ENCODE measurements at regions of chr10 and their contacts with region 1.

Region 1: DNA sequence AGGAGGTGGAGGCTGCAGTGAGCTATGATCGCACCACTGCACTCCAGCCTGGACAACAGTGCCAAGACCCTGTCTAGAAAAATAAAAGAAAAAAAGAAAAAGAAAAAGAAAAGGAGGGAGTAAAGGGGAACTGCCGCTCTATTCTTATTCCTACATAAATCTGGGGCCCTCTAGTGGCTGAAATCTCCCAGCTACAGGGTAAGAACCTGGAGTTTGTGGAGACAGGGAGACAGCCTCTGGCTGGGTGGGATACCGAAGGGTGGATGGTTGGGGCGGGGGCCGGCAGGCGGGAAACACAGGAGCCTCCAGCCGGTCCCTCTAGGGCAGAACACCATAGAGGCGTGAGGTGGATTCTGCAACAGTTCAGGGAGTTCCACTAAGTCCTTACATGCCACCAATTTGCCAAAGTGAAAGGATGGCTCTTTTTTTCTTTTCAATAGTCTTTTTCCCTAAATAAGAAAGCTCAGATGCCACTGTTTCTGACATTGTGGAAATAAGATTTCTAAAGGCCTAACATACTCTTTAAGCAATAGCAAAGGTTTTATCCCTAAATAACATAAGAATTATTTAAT is 117.3 kb downstream of the SVIL start:
- DNase-seq: no peak
- ATAC-seq: peak in 3 of 4 donors; percentile 3 to 39 (median 31)
- H3K4me3 ChIP-seq: no peak overlapping the region
- H3K27ac ChIP-seq: peak overlapping the region; percentile 2 to 90 (median 82)
- H3K4me1 ChIP-seq: peaks cover 0 to 38% (median 13%) of the 10 kb centered on the region in 12 donors
- H3K27me3 ChIP-seq: no peaks in the 10 kb centered on the region
- CTCF ChIP-seq: peak; percentile 21 to 60 (median 43)
- POLR2A ChIP-seq: no peak

Region 2: GRCh38 chr10:29430101-29430500 is 87.3 kb before region 1 on chr10:
- intact Hi-C with region 1: no loop called
- DNase-seq: no peak
- ATAC-seq: no peak
- H3K4me3 ChIP-seq: no peak overlapping the region
- H3K27ac ChIP-seq: no peak overlapping the region
- H3K4me1 ChIP-seq: peaks cover 0 to 30% (median 5%) of the 10 kb centered on the region in 12 donors
- H3K27me3 ChIP-seq: no peaks in the 10 kb centered on the region
- CTCF ChIP-seq: no peak
- POLR2A ChIP-seq: no peak

Region 3: DNA sequence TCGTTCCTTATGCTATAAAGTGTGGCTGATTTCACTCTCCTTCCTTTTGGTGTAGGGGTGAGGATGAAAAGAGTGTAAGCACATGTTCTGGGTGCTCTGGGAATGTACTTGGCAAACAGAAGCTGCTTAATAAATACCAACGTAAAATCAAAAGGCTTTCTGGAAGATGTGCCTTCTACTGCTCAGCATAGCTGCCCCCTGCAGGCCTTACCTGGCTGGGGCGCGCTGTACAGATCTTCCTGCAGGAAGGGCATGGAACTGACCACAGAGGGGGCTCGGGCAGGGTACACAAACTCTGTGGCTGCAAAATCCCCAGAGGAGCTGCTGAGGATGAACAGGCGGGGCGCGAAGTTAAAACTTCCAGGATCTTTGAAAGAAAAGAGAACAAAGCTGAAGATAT is 52.1 kb before region 1 on chr10:
- intact Hi-C with region 1: loop called in 1 of 10 experiments (anchors 5 kb)
- DNase-seq: no peak
- ATAC-seq: no peak
- H3K4me3 ChIP-seq: no peak overlapping the region
- H3K27ac ChIP-seq: peak overlapping the region in 11 of 12 donors; percentile 31 to 81 (median 65)
- H3K4me1 ChIP-seq: peaks cover 0 to 26% (median 7%) of the 10 kb centered on the region in 12 donors
- H3K27me3 ChIP-seq: no peaks in the 10 kb centered on the region
- CTCF ChIP-seq: peak in 3 of 12 donors; percentile 4 to 14 (median 12)
- POLR2A ChIP-seq: no peak

Region 4: GRCh38 chr10:29585488-29585980 is 68.1 kb after region 1 on chr10:
- intact Hi-C with region 1: loop called in 2 of 10 experiments (anchors 5 to 10 kb)
- DNase-seq: peak in 2 of 5 donors; percentile 39
- ATAC-seq: peak in 3 of 4 donors; percentile 20 to 36 (median 27)
- H3K4me3 ChIP-seq: no peak overlapping the region
- H3K27ac ChIP-seq: peak overlapping the region in 9 of 12 donors; percentile 23 to 89 (median 83)
- H3K4me1 ChIP-seq: peaks cover 0 to 79% (median 37%) of the 10 kb centered on the region in 12 donors
- H3K27me3 ChIP-seq: no peaks in the 10 kb centered on the region
- CTCF ChIP-seq: peak in 1 of 12 donors; percentile 13
- POLR2A ChIP-seq: no peak

Region 5: GRCh38 chr10:29600067-29600466 is 82.6 kb after region 1 on chr10:
- intact Hi-C with region 1: no loop called
- DNase-seq: no peak
- ATAC-seq: no peak
- H3K4me3 ChIP-seq: no peak overlapping the region
- H3K27ac ChIP-seq: peak overlapping the region; percentile 17 to 95 (median 80)
- H3K4me1 ChIP-seq: peaks cover 0 to 83% (median 37%) of the 10 kb centered on the region in 12 donors
- H3K27me3 ChIP-seq: no peaks in the 10 kb centered on the region
- CTCF ChIP-seq: no peak
- POLR2A ChIP-seq: no peak

Region 6: GRCh38 chr10:29772403-29772802 is 255.0 kb after region 1 on chr10:
- intact Hi-C with region 1: no loop called
- DNase-seq: no peak
- ATAC-seq: no peak
- H3K4me3 ChIP-seq: no peak overlapping the region
- H3K27ac ChIP-seq: peak overlapping the region in 1 of 12 donors; percentile 61
- H3K4me1 ChIP-seq: no peaks in the 10 kb centered on the region
- H3K27me3 ChIP-seq: no peaks in the 10 kb centered on the region
- CTCF ChIP-seq: no peak
- POLR2A ChIP-seq: no peak

Measured in heart left ventricle (tissue), 16 donors.